CD8-positive, alpha-beta T cell (primary cell): ENCODE measurements at regions of chr3 and their contacts with region 1.

Region 1: GRCh38 chr3:97971677-97972567 is at the start of gene RIOX2:
- DNase-seq: peak; percentile 48 to 87 (median 74)
- ATAC-seq: peak; percentile 91
- H3K4me3 ChIP-seq: peak within 1 kb of the TSS; percentile 44 to 61
- H3K4me3 Mint-ChIP-seq: peak within 1 kb of the TSS; percentile 93
- H3K27ac ChIP-seq: peak within 1 kb of the TSS; percentile 55 to 57
- H3K27ac Mint-ChIP-seq: peak within 1 kb of the TSS; percentile 94
- H3K4me1 ChIP-seq: peaks cover 31% of the 10 kb centered on the region
- H3K4me1 Mint-ChIP-seq: peaks cover 56% of the 10 kb centered on the region
- H3K27me3 ChIP-seq: no peaks in the 10 kb centered on the region
- H3K27me3 Mint-ChIP-seq: no peaks in the 10 kb centered on the region
- CTCF ChIP-seq: no peak
- total RNA-seq, gene RIOX2: 12.1 to 12.2 TPM

Region 2: GRCh38 chr3:97764407-97765238 is 207.3 kb before region 1 on chr3 and contains the start of gene ARL6:
- CTCF ChIA-PET with region 1: interaction called, 3 read pairs
- POLR2A ChIA-PET with region 1: interaction called, 3 read pairs
- intact Hi-C with region 1: loop called in 1 of 2 experiments (anchors 1 kb)
- DNase-seq: peak; percentile 28 to 83 (median 70)
- ATAC-seq: peak; percentile 90
- H3K4me3 ChIP-seq: peak within 1 kb of the TSS; percentile 76 to 88
- H3K4me3 Mint-ChIP-seq: peak within 1 kb of the TSS; percentile 98
- H3K27ac ChIP-seq: peak within 1 kb of the TSS; percentile 64 to 72
- H3K27ac Mint-ChIP-seq: peak within 1 kb of the TSS; percentile 95
- H3K4me1 ChIP-seq: peaks cover 14% of the 10 kb centered on the region
- H3K4me1 Mint-ChIP-seq: peaks cover 34% of the 10 kb centered on the region
- H3K27me3 ChIP-seq: no peaks in the 10 kb centered on the region
- H3K27me3 Mint-ChIP-seq: no peaks in the 10 kb centered on the region
- CTCF ChIP-seq: no peak
- total RNA-seq, gene ARL6: 0.97 to 1.1 TPM

Region 3: GRCh38 chr3:97899331-97899730 is 72.6 kb before region 1 on chr3:
- CTCF ChIA-PET with region 1: no interaction called
- POLR2A ChIA-PET with region 1: no interaction called
- intact Hi-C with region 1: loop called in 1 of 2 experiments (anchors 1 kb)
- DNase-seq: no peak
- ATAC-seq: no peak
- H3K4me3 ChIP-seq: no peak overlapping the region
- H3K4me3 Mint-ChIP-seq: no peak overlapping the region
- H3K27ac ChIP-seq: no peak overlapping the region
- H3K27ac Mint-ChIP-seq: no peak overlapping the region
- H3K4me1 ChIP-seq: no peaks in the 10 kb centered on the region
- H3K4me1 Mint-ChIP-seq: peaks cover 12% of the 10 kb centered on the region
- H3K27me3 ChIP-seq: no peaks in the 10 kb centered on the region
- H3K27me3 Mint-ChIP-seq: no peaks in the 10 kb centered on the region
- CTCF ChIP-seq: no peak

Region 4: DNA sequence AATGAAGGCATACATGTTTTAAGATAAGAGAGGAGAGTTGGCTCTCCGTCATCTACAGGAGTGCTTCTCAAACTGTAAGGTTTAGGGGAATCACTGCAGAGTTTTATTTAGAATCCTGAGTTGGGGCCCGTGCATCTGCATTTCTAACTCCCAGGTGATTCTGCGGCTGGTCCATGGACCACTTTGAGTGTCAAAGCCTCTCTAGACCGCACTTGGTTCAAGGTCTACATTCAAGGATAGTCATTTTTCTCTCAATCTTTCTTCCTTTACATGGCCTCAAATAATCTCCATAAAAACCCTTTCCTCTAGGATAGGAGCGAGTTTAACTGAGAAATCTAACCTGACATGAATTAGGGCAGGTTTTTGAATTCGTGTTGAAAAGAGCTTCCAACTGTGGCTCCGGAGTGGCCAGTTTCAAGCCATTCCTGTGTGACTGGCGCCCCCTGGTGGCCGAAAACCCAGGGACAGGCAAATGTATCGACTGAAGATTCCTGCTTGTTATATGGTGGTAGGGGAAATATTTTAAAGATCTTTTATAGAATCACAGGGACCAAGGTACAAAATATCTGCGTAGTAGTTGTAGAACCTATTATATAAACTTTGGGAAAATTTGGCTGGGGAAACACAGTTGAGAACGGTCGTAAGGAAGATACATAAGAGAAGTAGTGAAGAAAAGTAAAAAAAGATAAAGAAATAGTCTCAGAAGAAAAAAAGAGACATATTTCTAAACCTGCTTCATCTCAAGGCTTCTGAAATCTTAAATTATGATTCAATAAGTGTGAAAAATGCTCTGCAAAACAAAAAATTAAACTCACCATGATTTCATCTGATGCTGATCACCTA is 51.3 kb after region 1 on chr3:
- CTCF ChIA-PET with region 1: interaction called, 6 read pairs
- POLR2A ChIA-PET with region 1: no interaction called
- intact Hi-C with region 1: loop called in 1 of 2 experiments (anchors 2 kb)
- DNase-seq: peak; percentile 72 to 98 (median 86)
- ATAC-seq: peak; percentile 78
- H3K4me3 ChIP-seq: no peak overlapping the region
- H3K4me3 Mint-ChIP-seq: no peak overlapping the region
- H3K27ac ChIP-seq: no peak overlapping the region
- H3K27ac Mint-ChIP-seq: no peak overlapping the region
- H3K4me1 ChIP-seq: no peaks in the 10 kb centered on the region
- H3K4me1 Mint-ChIP-seq: peaks cover 2% of the 10 kb centered on the region
- H3K27me3 ChIP-seq: no peaks in the 10 kb centered on the region
- H3K27me3 Mint-ChIP-seq: no peaks in the 10 kb centered on the region
- CTCF ChIP-seq: peak; percentile 98

Region 5: GRCh38 chr3:98593046-98593936 is 621.4 kb after region 1 on chr3 and contains the start of gene CPOX:
- CTCF ChIA-PET with region 1: no interaction called
- POLR2A ChIA-PET with region 1: no interaction called
- intact Hi-C with region 1: loop called in 1 of 2 experiments (anchors 10 kb)
- DNase-seq: peak; percentile 54 to 87 (median 80)
- ATAC-seq: peak; percentile 96
- H3K4me3 ChIP-seq: peak within 1 kb of the TSS; percentile 70 to 92
- H3K4me3 Mint-ChIP-seq: peak within 1 kb of the TSS; percentile 99
- H3K27ac ChIP-seq: peak within 1 kb of the TSS; percentile 61 to 74
- H3K27ac Mint-ChIP-seq: peak within 1 kb of the TSS; percentile 95
- H3K4me1 ChIP-seq: peaks cover 15% of the 10 kb centered on the region
- H3K4me1 Mint-ChIP-seq: peaks cover 35% of the 10 kb centered on the region
- H3K27me3 ChIP-seq: no peaks in the 10 kb centered on the region
- H3K27me3 Mint-ChIP-seq: no peaks in the 10 kb centered on the region
- CTCF ChIP-seq: no peak
- total RNA-seq, gene CPOX: 7.5 to 7.7 TPM

Region 6: GRCh38 chr3:99817437-99818240 is 1845.7 kb after region 1 on chr3 and contains the start of gene CMSS1:
- CTCF ChIA-PET with region 1: no interaction called
- POLR2A ChIA-PET with region 1: no interaction called
- intact Hi-C with region 1: loop called in 1 of 2 experiments (anchors 5 kb)
- DNase-seq: peak; percentile 89 to 99 (median 96)
- ATAC-seq: peak; percentile 84
- H3K4me3 ChIP-seq: peak within 1 kb of the TSS; percentile 55 to 79
- H3K4me3 Mint-ChIP-seq: peak within 1 kb of the TSS; percentile 96
- H3K27ac ChIP-seq: peak within 1 kb of the TSS; percentile 90 to 95
- H3K27ac Mint-ChIP-seq: peak within 1 kb of the TSS; percentile 100
- H3K4me1 ChIP-seq: peaks cover 20% of the 10 kb centered on the region
- H3K4me1 Mint-ChIP-seq: peaks cover 41% of the 10 kb centered on the region
- H3K27me3 ChIP-seq: no peaks in the 10 kb centered on the region
- H3K27me3 Mint-ChIP-seq: no peaks in the 10 kb centered on the region
- CTCF ChIP-seq: no peak
- total RNA-seq, gene CMSS1: 9.0 to 13.7 TPM